ENCODE measurements at regions of chr11 and their contacts with region 1.

Region 1: DNA sequence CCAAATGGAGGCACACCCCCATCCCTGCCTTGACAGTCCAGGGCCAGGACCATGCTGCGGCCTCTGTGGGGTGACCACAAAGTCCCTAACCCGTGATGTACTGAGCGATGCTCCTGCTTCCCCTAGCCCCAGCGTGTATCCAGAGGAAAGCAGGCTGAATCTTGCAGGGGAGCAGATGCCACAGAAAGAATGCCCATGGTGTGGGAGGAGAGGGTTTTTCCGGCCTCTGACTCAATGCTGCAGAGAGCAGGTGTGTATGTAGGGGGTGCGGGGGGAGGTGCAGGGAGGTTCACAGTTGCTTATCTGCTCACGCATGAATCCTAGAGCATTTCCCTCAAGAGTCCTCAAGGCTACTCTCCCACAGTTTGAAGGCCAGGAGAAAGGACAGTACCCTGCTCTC is 130.6 kb downstream of the CEP164 start:
- DNase-seq: peak; percentile 84
- H3K4me3 Mint-ChIP-seq: peak overlapping the region; percentile 30
- H3K27ac Mint-ChIP-seq: peak overlapping the region; percentile 66
- H3K4me1 Mint-ChIP-seq: peaks cover 31% of the 10 kb centered on the region
- H3K27me3 Mint-ChIP-seq: peaks cover 10% of the 10 kb centered on the region

Region 2: DNA sequence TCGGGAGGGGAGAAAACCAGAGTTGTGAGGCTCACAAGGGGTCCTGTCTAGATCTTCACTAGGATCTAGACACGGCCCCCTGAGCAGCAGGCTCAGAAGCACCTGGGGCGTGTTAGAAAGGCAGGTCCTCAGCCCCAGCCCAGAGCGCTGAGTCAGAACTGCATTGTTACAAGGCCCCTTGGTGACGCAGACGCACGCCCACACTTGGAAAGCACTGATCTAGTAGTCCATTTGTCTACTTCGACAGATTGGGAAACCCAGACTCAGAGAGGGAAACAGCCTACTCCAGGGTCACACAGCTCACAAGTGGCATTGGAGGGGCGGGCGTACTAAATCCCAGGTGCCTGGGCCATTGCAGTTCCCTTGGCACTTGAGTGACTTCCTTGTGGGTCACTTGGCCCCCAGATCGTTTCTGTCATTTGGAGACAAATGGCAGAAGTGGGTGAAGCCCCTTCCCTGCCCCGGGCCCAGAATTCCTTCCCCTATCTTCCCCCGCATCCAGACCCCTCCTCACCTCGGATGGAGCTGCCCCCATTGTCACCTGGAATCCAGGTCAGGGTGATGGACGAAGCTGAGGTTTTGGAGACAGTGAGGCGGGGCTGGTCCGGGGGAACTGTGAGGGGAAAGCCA is 19.8 kb before region 1 on chr11:
- CTCF ChIA-PET with region 1: no interaction called
- POLR2A ChIA-PET with region 1: no interaction called
- intact Hi-C with region 1: loop called (anchors 1 kb)
- DNase-seq: peak; percentile 86
- H3K4me3 Mint-ChIP-seq: no peak overlapping the region
- H3K27ac Mint-ChIP-seq: no peak overlapping the region
- H3K4me1 Mint-ChIP-seq: no peaks in the 10 kb centered on the region
- H3K27me3 Mint-ChIP-seq: peaks cover 24% of the 10 kb centered on the region

Region 3: GRCh38 chr11:117610045-117610444 is 151.8 kb after region 1 on chr11:
- CTCF ChIA-PET with region 1: no interaction called
- POLR2A ChIA-PET with region 1: no interaction called
- intact Hi-C with region 1: loop called (anchors 1 kb)
- DNase-seq: peak; percentile 75
- H3K4me3 Mint-ChIP-seq: no peak overlapping the region
- H3K27ac Mint-ChIP-seq: no peak overlapping the region
- H3K4me1 Mint-ChIP-seq: peaks cover 28% of the 10 kb centered on the region
- H3K27me3 Mint-ChIP-seq: peaks cover 6% of the 10 kb centered on the region

Measured in activated CD4-positive, alpha-beta memory T cell treated with anti-CD3 and anti-CD28 coated beads for 36 hours (primary cell).